ENCODE measurements at regions of chr17 and their contacts with region 1.

Region 1: GRCh38 chr17:65988081-65988850 is 203.7 kb downstream of the CEP112 start:
- DNase-seq: peak; percentile 5
- ATAC-seq: peak; percentile 62
- H3K4me3 ChIP-seq: no peak overlapping the region
- H3K27ac ChIP-seq: no peak overlapping the region
- H3K4me1 ChIP-seq: no peaks in the 10 kb centered on the region
- H3K27me3 ChIP-seq: no peaks in the 10 kb centered on the region
- CTCF ChIP-seq: peak; percentile 42 to 53 (median 51); a peak in 5 of 6 replicates
- EP300 ChIP-seq: no peak
- POLR2A ChIP-seq: no peak
- RAD21 ChIP-seq: peak; percentile 81

Region 2: GRCh38 chr17:65294179-65294720 is 694.0 kb before region 1 on chr17:
- CTCF ChIA-PET with region 1: interaction called, 19 read pairs
- POLR2A ChIA-PET with region 1: no interaction called
- RAD21 ChIA-PET with region 1: interaction called, 11 read pairs
- SMC1A ChIA-PET with region 1: interaction called, 14 read pairs
- in situ Hi-C with region 1: loop called (anchors 25 kb)
- intact Hi-C with region 1: loop called (anchors 2 kb)
- DNase-seq: no peak
- ATAC-seq: peak; percentile 99
- H3K4me3 ChIP-seq: no peak overlapping the region
- H3K27ac ChIP-seq: no peak overlapping the region
- H3K4me1 ChIP-seq: no peaks in the 10 kb centered on the region
- H3K27me3 ChIP-seq: no peaks in the 10 kb centered on the region
- CTCF ChIP-seq: peak; percentile 82 to 87 (median 85)
- EP300 ChIP-seq: no peak
- POLR2A ChIP-seq: no peak
- RAD21 ChIP-seq: peak; percentile 88

Region 3: GRCh38 chr17:65718601-65719000 is 269.7 kb before region 1 on chr17:
- CTCF ChIA-PET with region 1: no interaction called
- POLR2A ChIA-PET with region 1: no interaction called
- RAD21 ChIA-PET with region 1: no interaction called
- SMC1A ChIA-PET with region 1: no interaction called
- in situ Hi-C with region 1: no loop called
- intact Hi-C with region 1: no loop called
- DNase-seq: no peak
- ATAC-seq: no peak
- H3K4me3 ChIP-seq: no peak overlapping the region
- H3K27ac ChIP-seq: no peak overlapping the region
- H3K4me1 ChIP-seq: no peaks in the 10 kb centered on the region
- H3K27me3 ChIP-seq: no peaks in the 10 kb centered on the region; a peak in 1 of 4 replicates
- CTCF ChIP-seq: no peak
- EP300 ChIP-seq: no peak
- POLR2A ChIP-seq: no peak
- RAD21 ChIP-seq: no peak

Region 4: DNA sequence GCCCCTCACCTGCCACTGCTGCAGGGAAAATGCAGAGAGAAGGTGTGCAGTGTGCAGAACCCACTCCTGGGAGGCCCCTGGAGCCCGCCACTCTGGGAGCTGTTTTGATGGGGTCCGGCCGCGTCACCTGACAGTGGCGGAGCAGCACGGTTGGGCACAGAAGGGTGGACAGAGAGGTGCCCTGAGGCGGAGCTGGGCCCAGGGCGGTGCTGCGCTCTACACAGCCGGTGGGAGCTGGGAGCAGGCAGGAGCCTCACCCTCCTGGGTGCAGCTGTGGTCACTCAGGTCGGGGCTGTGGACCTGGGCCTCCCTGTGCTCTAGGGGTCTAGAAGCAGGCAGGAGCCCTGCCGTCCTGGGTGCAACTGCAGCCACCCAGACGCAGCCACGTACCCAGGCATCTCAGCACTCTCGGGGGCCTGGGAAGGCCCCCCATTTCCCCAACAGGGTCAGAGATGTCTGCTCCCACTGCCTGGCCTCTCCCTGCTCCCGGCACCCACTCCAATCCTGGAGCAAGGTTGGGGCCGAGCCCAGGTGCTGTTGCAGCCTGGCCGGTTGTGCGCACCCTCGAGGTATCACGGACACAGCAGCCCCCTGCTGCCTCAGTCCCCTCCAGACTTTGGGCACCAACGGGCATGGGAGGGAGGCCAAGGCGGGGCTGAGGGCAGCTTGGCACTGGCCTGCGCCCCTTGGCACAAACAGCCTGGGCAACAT is 122.4 kb before region 1 on chr17:
- CTCF ChIA-PET with region 1: no interaction called
- POLR2A ChIA-PET with region 1: no interaction called
- RAD21 ChIA-PET with region 1: no interaction called
- SMC1A ChIA-PET with region 1: no interaction called
- in situ Hi-C with region 1: no loop called
- intact Hi-C with region 1: no loop called
- DNase-seq: no peak
- ATAC-seq: no peak
- H3K4me3 ChIP-seq: no peak overlapping the region
- H3K27ac ChIP-seq: no peak overlapping the region
- H3K4me1 ChIP-seq: no peaks in the 10 kb centered on the region
- H3K27me3 ChIP-seq: no peaks in the 10 kb centered on the region
- CTCF ChIP-seq: no peak
- EP300 ChIP-seq: no peak
- POLR2A ChIP-seq: no peak
- RAD21 ChIP-seq: no peak

Region 5: GRCh38 chr17:66165513-66166123 is 177.4 kb after region 1 on chr17:
- CTCF ChIA-PET with region 1: interaction called, 5 read pairs
- POLR2A ChIA-PET with region 1: no interaction called
- RAD21 ChIA-PET with region 1: no interaction called
- SMC1A ChIA-PET with region 1: interaction called, 3 read pairs
- in situ Hi-C with region 1: no loop called
- intact Hi-C with region 1: loop called (anchors 10 kb)
- DNase-seq: peak; percentile 5
- ATAC-seq: peak; percentile 53; the same call in 2 of the 3 replicates
- H3K4me3 ChIP-seq: no peak overlapping the region
- H3K27ac ChIP-seq: no peak overlapping the region
- H3K4me1 ChIP-seq: no peaks in the 10 kb centered on the region
- H3K27me3 ChIP-seq: no peaks in the 10 kb centered on the region; a peak in 1 of 4 replicates
- CTCF ChIP-seq: peak; percentile 54 to 73 (median 56); a peak in 5 of 6 replicates
- EP300 ChIP-seq: no peak
- POLR2A ChIP-seq: no peak
- RAD21 ChIP-seq: peak; percentile 91

Measured in GM12878 (cell line).